WTC11 (cell line): ENCODE measurements at regions of chr3 and their contacts with region 1.

Region 1: GRCh38 chr3:16177962-16178627 is 3.6 kb downstream of the GALNT15 start:
- DNase-seq: peak; percentile 91
- ATAC-seq: peak; percentile 93
- H3K4me3 Mint-ChIP-seq: no peak overlapping the region; the same call in 1 of the 2 replicates
- H3K27ac Mint-ChIP-seq: no peak overlapping the region
- H3K4me1 Mint-ChIP-seq: peaks cover 29% of the 10 kb centered on the region
- H3K27me3 Mint-ChIP-seq: peaks cover 2% of the 10 kb centered on the region; the same call in 1 of the 2 replicates
- CTCF ChIP-seq: peak; percentile 95

Region 2: GRCh38 chr3:16048435-16049318 is 129.4 kb before region 1 on chr3:
- CTCF ChIA-PET with region 1: interaction called, 64 read pairs
- POLR2A ChIA-PET with region 1: no interaction called
- DNase-seq: peak; percentile 18
- ATAC-seq: peak; percentile 97
- H3K4me3 Mint-ChIP-seq: no peak overlapping the region
- H3K27ac Mint-ChIP-seq: no peak overlapping the region
- H3K4me1 Mint-ChIP-seq: no peaks in the 10 kb centered on the region
- H3K27me3 Mint-ChIP-seq: no peaks in the 10 kb centered on the region
- CTCF ChIP-seq: peak; percentile 67

Region 3: GRCh38 chr3:16053794-16054193 is 124.3 kb before region 1 on chr3:
- CTCF ChIA-PET with region 1: interaction called, 64 read pairs
- POLR2A ChIA-PET with region 1: no interaction called
- DNase-seq: no peak
- ATAC-seq: no peak
- H3K4me3 Mint-ChIP-seq: no peak overlapping the region
- H3K27ac Mint-ChIP-seq: no peak overlapping the region
- H3K4me1 Mint-ChIP-seq: peaks cover 4% of the 10 kb centered on the region
- H3K27me3 Mint-ChIP-seq: no peaks in the 10 kb centered on the region
- CTCF ChIP-seq: no peak

Region 4: DNA sequence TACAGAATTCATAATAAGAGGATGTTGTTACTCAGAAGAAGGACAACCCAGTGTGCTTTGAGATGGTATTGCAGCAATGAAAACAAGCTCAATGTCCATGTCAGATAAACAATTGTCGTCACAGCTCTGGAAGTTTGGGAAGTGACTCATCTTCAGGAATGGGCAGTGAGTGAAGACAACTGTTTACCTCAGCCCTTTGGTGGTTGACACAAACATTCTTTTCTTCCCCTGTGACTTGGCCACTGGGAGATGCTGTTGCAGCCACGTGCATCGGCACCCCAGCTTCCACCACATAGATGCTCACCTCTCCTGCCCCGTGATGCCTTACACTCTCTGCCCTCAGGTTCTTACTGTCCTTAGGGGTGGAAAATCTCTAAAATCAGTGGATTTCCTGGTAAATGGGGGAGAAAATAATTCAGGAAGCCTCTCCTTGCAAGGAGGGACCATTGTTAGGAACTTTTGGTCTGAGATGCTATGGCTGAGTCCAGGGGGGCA is 117.7 kb before region 1 on chr3:
- CTCF ChIA-PET with region 1: interaction called, 10 read pairs
- POLR2A ChIA-PET with region 1: no interaction called
- DNase-seq: no peak
- ATAC-seq: peak; percentile 43
- H3K4me3 Mint-ChIP-seq: no peak overlapping the region
- H3K27ac Mint-ChIP-seq: no peak overlapping the region
- H3K4me1 Mint-ChIP-seq: peaks cover 4% of the 10 kb centered on the region
- H3K27me3 Mint-ChIP-seq: peaks cover 4% of the 10 kb centered on the region; the same call in 1 of the 2 replicates
- CTCF ChIP-seq: no peak

Region 5: GRCh38 chr3:16069149-16069922 is 108.8 kb before region 1 on chr3:
- CTCF ChIA-PET with region 1: interaction called, 15 read pairs
- POLR2A ChIA-PET with region 1: no interaction called
- DNase-seq: no peak
- ATAC-seq: no peak
- H3K4me3 Mint-ChIP-seq: no peak overlapping the region
- H3K27ac Mint-ChIP-seq: no peak overlapping the region
- H3K4me1 Mint-ChIP-seq: no peaks in the 10 kb centered on the region
- H3K27me3 Mint-ChIP-seq: no peaks in the 10 kb centered on the region
- CTCF ChIP-seq: no peak

Region 6: GRCh38 chr3:16124636-16125035 is 53.5 kb before region 1 on chr3:
- CTCF ChIA-PET with region 1: no interaction called
- POLR2A ChIA-PET with region 1: no interaction called
- DNase-seq: no peak
- ATAC-seq: no peak
- H3K4me3 Mint-ChIP-seq: no peak overlapping the region
- H3K27ac Mint-ChIP-seq: no peak overlapping the region
- H3K4me1 Mint-ChIP-seq: 0 out of 2 replicates have a peak, but pooled peaks cover 3% of the 10 kb centered on the region
- H3K27me3 Mint-ChIP-seq: no peaks in the 10 kb centered on the region
- CTCF ChIP-seq: no peak

Region 7: DNA sequence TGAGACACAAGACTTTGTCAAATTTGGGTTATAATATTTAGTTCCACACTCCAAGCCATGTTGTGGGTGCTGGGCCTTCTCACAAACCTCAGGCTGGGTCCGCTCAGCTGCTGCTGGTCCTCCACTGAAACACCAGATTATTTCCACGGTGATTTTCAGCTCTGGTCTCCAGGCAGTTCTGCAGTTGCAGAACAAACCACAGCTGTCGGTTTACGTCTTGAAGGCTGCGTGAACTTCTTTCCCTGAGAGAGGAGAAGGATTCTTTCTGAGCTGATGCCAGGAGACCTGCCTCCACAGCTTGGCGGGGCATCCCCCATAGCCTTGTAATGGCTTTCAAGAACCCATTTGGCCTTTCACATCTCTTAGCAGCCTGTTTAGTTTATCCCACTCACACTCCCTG is 12.6 kb after region 1 on chr3:
- CTCF ChIA-PET with region 1: interaction called, 10 read pairs
- POLR2A ChIA-PET with region 1: no interaction called
- DNase-seq: no peak
- ATAC-seq: no peak
- H3K4me3 Mint-ChIP-seq: no peak overlapping the region
- H3K27ac Mint-ChIP-seq: no peak overlapping the region
- H3K4me1 Mint-ChIP-seq: no peaks in the 10 kb centered on the region
- H3K27me3 Mint-ChIP-seq: peaks cover 4% of the 10 kb centered on the region
- CTCF ChIP-seq: no peak

Region 8: DNA sequence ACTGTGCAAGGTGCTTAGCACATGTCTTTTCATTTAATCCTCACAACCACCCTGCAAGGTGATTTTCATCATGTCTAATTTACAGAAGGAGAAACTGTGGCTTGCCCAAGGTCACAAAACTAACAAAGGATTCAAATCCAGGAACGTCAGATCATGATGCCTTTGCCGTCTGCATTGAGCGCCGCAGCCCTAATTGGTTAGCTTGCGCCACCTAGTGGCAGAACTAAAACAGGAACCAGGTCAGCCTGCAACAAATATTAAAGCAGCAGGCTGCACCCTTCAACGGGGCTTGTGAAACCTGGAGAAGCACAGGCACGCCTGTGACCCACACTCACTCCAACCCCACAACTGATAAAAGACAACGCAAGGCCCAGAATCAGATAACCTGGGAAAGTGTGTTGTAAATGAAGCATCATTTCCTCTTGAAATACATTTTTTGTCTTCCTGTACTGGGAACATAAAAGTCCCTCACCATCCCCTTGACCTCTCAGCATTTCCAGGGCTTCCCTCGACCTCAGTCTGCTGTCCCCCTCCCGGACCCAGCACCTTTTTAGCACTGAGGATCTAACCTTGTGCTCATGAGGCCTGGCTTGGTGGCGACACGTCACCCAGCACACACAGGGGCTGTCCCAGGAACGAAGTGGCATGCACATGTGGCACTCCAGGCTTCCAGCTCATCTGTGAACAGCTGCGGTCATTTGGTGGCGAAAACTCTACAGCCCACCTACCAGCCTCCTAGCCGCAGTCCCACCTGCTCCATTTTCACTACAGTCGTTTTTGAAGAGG is 69.4 kb after region 1 on chr3:
- CTCF ChIA-PET with region 1: interaction called, 10 read pairs
- POLR2A ChIA-PET with region 1: no interaction called
- DNase-seq: peak; percentile 80
- ATAC-seq: peak; percentile 83
- H3K4me3 Mint-ChIP-seq: no peak overlapping the region
- H3K27ac Mint-ChIP-seq: no peak overlapping the region
- H3K4me1 Mint-ChIP-seq: peaks cover 14% of the 10 kb centered on the region
- H3K27me3 Mint-ChIP-seq: peaks cover 3% of the 10 kb centered on the region; the same call in 1 of the 2 replicates
- CTCF ChIP-seq: peak; percentile 89